ENCODE measurements at regions of chr3 and their contacts with region 1.

Region 1: GRCh38 chr3:128879125-128879969 is at the start of gene ACAD9:
- DNase-seq: peak; percentile 97 to 99
- H3K4me3 ChIP-seq: peak within 1 kb of the TSS; percentile 74 to 76
- H3K27ac ChIP-seq: peak within 1 kb of the TSS; percentile 91 to 96
- H3K4me1 ChIP-seq: peaks cover 0 to 42% (median 28%) of the 10 kb centered on the region in 4 donors
- H3K27me3 ChIP-seq: no peaks in the 10 kb centered on the region
- CTCF ChIP-seq: peak in 1 of 2 experiments; percentile 25

Region 2: GRCh38 chr3:128617557-128618397 is 261.6 kb before region 1 on chr3:
- intact Hi-C with region 1: loop called (anchors 10 kb)
- DNase-seq: peak; percentile 97 to 99
- H3K4me3 ChIP-seq: peak overlapping the region; percentile 85 to 98
- H3K27ac ChIP-seq: peak overlapping the region; percentile 85 to 91
- H3K4me1 ChIP-seq: peaks cover 0 to 20% (median 16%) of the 10 kb centered on the region in 4 donors
- H3K27me3 ChIP-seq: no peaks in the 10 kb centered on the region
- CTCF ChIP-seq: peak; percentile 94 to 97

Region 3: GRCh38 chr3:128725932-128726690 is 153.2 kb before region 1 on chr3 and contains the start of gene RAB7A:
- intact Hi-C with region 1: loop called (anchors 10 kb)
- DNase-seq: peak; percentile 98 to 99
- H3K4me3 ChIP-seq: peak within 1 kb of the TSS; percentile 93 to 99
- H3K27ac ChIP-seq: peak within 1 kb of the TSS; percentile 90 to 100
- H3K4me1 ChIP-seq: peaks cover 0 to 48% (median 37%) of the 10 kb centered on the region in 4 donors
- H3K27me3 ChIP-seq: no peaks in the 10 kb centered on the region
- CTCF ChIP-seq: peak in 1 of 2 experiments; percentile 23

Region 4: GRCh38 chr3:128763967-128764366 is 115.4 kb before region 1 on chr3:
- intact Hi-C with region 1: no loop called
- DNase-seq: no peak
- H3K4me3 ChIP-seq: no peak overlapping the region
- H3K27ac ChIP-seq: no peak overlapping the region
- H3K4me1 ChIP-seq: peaks cover 0 to 54% (median 21%) of the 10 kb centered on the region in 4 donors
- H3K27me3 ChIP-seq: no peaks in the 10 kb centered on the region
- CTCF ChIP-seq: no peak